ENCODE measurements at regions of chr9 and their contacts with region 1.

Region 1: DNA sequence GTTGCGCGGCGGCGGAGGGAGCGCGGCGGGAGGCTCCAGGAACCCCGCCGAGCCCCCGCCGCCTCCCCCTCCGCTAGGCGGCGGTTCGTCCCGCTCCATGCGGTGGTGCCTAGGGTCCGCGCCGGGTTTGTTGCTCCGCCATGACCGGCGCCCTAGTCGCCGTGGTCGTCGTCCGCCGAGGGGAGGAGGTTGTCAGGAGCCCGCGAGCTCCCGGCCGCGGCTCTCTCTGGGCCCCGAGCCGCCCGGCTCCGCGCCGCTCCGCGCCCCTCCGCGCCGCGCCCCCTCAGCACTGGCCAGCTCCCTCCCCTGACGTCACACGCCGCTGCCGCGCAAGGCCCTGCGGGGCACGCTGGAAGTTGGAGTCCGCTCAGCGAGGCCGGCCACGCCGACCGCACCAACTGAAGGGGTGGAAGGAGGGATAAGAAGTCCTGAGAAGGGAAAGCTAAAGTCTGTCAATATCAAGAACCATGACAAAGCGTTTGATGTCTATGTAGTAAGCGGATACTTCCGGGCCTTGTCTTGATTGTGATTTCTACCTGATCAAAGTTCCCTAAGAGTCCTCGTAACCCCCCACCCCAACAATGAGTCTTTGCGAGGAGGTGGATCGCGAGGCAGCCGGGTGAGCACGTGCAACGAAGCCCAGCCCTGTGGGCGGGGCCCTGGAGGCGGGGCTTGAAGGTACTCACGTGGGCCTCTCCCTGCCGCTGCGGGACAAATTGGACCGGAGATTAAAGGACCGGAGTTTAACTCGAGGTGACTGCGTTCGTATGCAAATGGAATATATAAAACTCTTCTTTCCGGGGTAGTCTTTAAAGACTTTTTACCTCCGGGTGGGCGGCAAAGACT is at the start of gene NR6A1:
- DNase-seq: peak; percentile 98
- H3K4me3 ChIP-seq: peak within 1 kb of the TSS; percentile 81 to 95 (median 86)
- H3K27ac ChIP-seq: peak within 1 kb of the TSS; percentile 53 to 81 (median 75)
- H3K4me1 ChIP-seq: peaks cover 21 to 44% (median 34%) of the 10 kb centered on the region in 4 donors
- H3K27me3 ChIP-seq: peaks cover 3 to 46% (median 16%) of the 10 kb centered on the region in 4 donors
- CTCF ChIP-seq: peak; percentile 20 to 52 (median 32)
- EP300 ChIP-seq: no peak
- POLR2A ChIP-seq: no peak
- total RNA-seq, gene NR6A1: 1.8 to 2.8 (median 2.0) TPM

Region 2: DNA sequence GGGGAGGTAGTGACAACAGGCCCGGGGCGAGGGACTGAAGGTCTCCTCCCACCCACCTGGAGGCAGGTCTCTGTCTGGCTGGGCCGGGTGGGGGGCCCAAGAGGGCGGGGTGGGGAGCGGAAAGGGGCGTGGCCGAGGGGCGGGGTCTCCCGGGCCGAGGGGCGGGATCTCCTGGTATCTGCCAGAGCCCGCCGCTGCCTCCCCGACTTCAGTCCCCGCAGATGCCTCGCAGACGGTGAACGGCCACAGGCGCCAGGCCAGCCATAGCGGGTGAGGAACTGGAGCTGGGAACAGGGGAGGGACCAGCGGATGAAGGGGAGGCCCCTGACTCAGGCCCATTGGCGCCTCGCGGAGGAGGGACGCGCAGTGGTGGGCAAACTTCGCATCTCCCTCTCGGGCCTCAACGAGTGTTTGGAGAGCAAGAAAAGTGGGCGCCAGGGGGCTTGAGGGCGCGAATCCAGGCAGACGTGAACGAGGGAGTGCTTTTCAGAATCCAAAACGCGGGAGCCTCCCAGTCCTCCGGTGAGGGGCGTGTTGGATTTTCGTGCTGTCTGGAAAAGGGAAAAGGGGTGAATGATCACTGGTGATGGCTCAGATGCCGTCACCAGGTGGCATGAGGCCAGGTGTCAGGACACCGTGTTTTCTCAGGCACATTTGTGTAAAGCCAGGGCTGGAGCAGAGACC is 320.9 kb before region 1 on chr9 and contains the start of gene ADGRD2:
- intact Hi-C with region 1: no loop called
- DNase-seq: no peak
- H3K4me3 ChIP-seq: peak within 1 kb of the TSS in 2 of 4 donors; percentile 18 to 23
- H3K27ac ChIP-seq: no peak within 1 kb of the TSS
- H3K4me1 ChIP-seq: peaks cover 6 to 24% (median 20%) of the 10 kb centered on the region in 4 donors
- H3K27me3 ChIP-seq: peaks cover 0 to 91% (median 36%) of the 10 kb centered on the region in 4 donors
- CTCF ChIP-seq: no peak
- EP300 ChIP-seq: no peak
- POLR2A ChIP-seq: no peak
- total RNA-seq, gene ADGRD2: not detected

Region 3: DNA sequence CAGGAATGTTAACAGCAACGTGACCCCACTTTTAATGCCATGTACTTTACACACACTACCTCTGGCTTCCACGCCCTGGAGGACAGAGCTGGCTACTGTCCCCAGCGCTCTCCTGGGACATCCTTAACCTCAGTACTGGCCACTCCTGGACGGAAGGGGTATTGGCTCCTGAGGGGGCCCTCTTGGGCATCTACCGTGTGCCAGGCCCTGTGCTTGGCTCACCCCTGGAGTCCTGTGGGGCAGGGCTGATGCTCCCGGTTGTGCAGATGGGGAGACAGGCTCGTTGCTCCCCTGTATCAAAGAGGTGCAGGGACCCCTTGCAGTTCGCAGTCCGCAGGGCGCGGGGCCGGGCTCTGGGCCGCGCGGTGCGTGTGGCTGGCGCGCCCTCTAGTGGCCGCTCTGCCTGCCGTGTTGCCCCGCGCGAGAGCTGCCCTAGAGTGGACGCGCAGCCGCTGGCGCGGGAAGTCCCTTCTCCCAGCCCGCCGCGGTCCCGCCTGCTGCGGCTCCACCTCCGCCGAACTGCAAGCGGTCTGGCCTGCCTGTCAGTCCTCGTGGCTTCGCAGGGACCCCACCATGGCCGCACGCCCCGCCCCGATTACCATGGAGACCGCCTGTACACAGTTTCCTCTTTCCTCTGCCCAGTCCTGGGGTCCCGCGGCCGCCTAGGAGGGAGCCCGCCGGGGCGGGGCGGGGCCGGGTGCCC is 81.7 kb after region 1 on chr9 and contains the start of gene WDR38:
- intact Hi-C with region 1: loop called (anchors 1 kb)
- DNase-seq: no peak
- H3K4me3 ChIP-seq: peak within 1 kb of the TSS; percentile 49 to 63 (median 55)
- H3K27ac ChIP-seq: peak within 1 kb of the TSS; percentile 53 to 68 (median 60)
- H3K4me1 ChIP-seq: peaks cover 24 to 31% (median 28%) of the 10 kb centered on the region in 4 donors
- H3K27me3 ChIP-seq: no peaks in the 10 kb centered on the region
- CTCF ChIP-seq: peak in 2 of 3 experiments; percentile 96 to 99
- EP300 ChIP-seq: no peak
- POLR2A ChIP-seq: no peak
- total RNA-seq, gene WDR38: 0.32 TPM in 1 of 4 donors, not detected in the others

Region 4: DNA sequence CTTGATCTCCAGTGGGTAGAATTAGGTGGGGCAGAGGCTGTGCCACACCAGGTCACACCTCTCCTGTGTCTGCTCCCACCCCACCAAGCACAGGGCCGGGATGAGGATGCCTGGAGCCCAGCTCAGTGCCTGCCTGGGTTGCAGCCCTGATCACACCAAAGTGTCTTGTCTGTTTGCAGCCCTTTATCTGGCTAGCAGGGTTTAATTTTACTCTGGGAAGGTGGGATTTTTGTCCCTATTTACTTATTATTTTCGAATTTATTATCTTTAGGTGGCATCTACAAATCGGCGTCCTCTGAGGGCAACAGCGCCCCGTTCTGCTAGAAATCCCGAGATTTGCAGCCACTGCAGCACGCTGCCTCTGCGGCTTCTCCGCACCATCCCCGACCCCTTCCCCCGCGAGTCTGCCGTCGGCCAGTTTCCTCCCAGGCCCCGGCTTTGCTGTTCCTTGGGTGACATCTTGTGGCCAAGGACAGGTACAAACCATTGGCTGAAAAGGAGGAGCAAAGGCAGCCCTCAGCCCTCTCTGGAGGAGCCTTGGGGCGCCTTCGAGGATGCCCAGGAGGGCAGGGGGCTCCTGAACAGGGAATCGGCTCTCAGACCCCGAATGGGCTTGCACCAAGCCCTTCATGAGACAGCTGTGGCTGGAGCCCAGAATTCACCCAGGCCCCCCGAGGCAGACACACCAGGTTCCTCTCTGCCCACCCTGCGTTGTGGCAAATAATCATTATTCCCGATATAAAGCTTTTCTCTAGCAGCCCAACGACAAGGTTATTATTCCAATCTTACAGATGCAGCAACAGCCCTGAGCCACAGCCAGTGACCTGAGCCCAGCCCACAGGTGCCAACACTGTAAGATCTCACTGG is 603.4 kb after region 1 on chr9:
- intact Hi-C with region 1: loop called (anchors 10 kb)
- DNase-seq: no peak
- H3K4me3 ChIP-seq: peak overlapping the region; percentile 34 to 49 (median 38)
- H3K27ac ChIP-seq: no peak overlapping the region
- H3K4me1 ChIP-seq: peaks cover 11 to 14% (median 13%) of the 10 kb centered on the region in 4 donors
- H3K27me3 ChIP-seq: peaks cover 0 to 18% (median 0%) of the 10 kb centered on the region in 4 donors
- CTCF ChIP-seq: peak; percentile 63 to 80 (median 67)
- EP300 ChIP-seq: no peak
- POLR2A ChIP-seq: no peak

Measured in esophagus muscularis mucosa (tissue), 4 donors.